Mammary epithelial cell (primary cell): ENCODE measurements at regions of chr2 and their contacts with region 1.

Region 1: GRCh38 chr2:192314800-192315481 is 120.2 kb upstream of the TMEFF2 start:
- DNase-seq: no peak
- H3K4me3 ChIP-seq: no peak overlapping the region
- H3K27ac ChIP-seq: no peak overlapping the region
- H3K4me1 ChIP-seq: no peaks in the 10 kb centered on the region
- H3K27me3 ChIP-seq: no peaks in the 10 kb centered on the region
- CTCF ChIP-seq: no peak

Region 2: GRCh38 chr2:192215096-192215877 is 99.7 kb before region 1 on chr2:
- CTCF ChIA-PET with region 1: no interaction called
- dilution Hi-C with region 1: loop called (anchors 5 kb)
- in situ Hi-C with region 1: no loop called
- intact Hi-C with region 1: no loop called
- DNase-seq: no peak
- H3K4me3 ChIP-seq: no peak overlapping the region
- H3K27ac ChIP-seq: no peak overlapping the region
- H3K4me1 ChIP-seq: no peaks in the 10 kb centered on the region
- H3K27me3 ChIP-seq: no peaks in the 10 kb centered on the region
- CTCF ChIP-seq: no peak

Region 3: DNA sequence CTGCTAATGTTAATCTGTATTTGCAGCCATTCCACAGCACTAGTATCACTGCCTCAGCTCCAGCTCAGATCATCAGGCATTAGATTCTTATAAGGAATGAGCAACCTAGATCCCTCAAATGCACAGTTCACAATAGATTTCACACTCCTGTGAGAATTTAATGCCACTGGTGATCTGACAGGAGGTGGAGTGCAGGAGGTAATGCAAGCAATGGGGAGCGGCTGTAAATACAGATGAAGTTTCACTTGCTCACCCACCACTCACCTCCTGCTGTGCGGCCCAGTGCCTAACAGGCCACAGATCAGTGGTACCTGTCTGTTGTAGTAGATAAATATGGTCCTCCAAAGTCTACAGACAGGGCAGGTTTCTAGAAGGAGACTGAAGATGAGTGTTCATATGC is 22.5 kb before region 1 on chr2:
- CTCF ChIA-PET with region 1: no interaction called
- dilution Hi-C with region 1: no loop called
- in situ Hi-C with region 1: no loop called
- intact Hi-C with region 1: no loop called
- DNase-seq: no peak
- H3K4me3 ChIP-seq: no peak overlapping the region
- H3K27ac ChIP-seq: no peak overlapping the region
- H3K4me1 ChIP-seq: no peaks in the 10 kb centered on the region
- H3K27me3 ChIP-seq: no peaks in the 10 kb centered on the region
- CTCF ChIP-seq: no peak